Mammary epithelial cell (primary cell): ENCODE measurements at regions of chr15 and their contacts with region 1.

Region 1: GRCh38 chr15:48975472-48976419 is 12.0 kb upstream of the SHC4 start:
- DNase-seq: peak; percentile 72
- H3K4me3 ChIP-seq: peak overlapping the region; percentile 50 to 63 (median 59)
- H3K27ac ChIP-seq: no peak overlapping the region
- H3K4me1 ChIP-seq: peaks cover 5% of the 10 kb centered on the region
- H3K27me3 ChIP-seq: no peaks in the 10 kb centered on the region
- CTCF ChIP-seq: peak; percentile 68 to 75

Region 2: GRCh38 chr15:48868536-48868935 is 107.2 kb before region 1 on chr15:
- CTCF ChIA-PET with region 1: no interaction called
- dilution Hi-C with region 1: loop called (anchors 5 kb)
- in situ Hi-C with region 1: no loop called
- intact Hi-C with region 1: no loop called
- DNase-seq: peak; percentile 86
- H3K4me3 ChIP-seq: peak overlapping the region in 1 of 3 experiments; percentile 11
- H3K27ac ChIP-seq: peak overlapping the region; percentile 75
- H3K4me1 ChIP-seq: peaks cover 25% of the 10 kb centered on the region
- H3K27me3 ChIP-seq: no peaks in the 10 kb centered on the region
- CTCF ChIP-seq: no peak

Region 3: GRCh38 chr15:48888191-48888590 is 87.6 kb before region 1 on chr15:
- CTCF ChIA-PET with region 1: no interaction called
- dilution Hi-C with region 1: no loop called
- in situ Hi-C with region 1: no loop called
- intact Hi-C with region 1: no loop called
- DNase-seq: no peak
- H3K4me3 ChIP-seq: no peak overlapping the region
- H3K27ac ChIP-seq: no peak overlapping the region
- H3K4me1 ChIP-seq: peaks cover 10% of the 10 kb centered on the region
- H3K27me3 ChIP-seq: no peaks in the 10 kb centered on the region
- CTCF ChIP-seq: no peak

Region 4: GRCh38 chr15:49023354-49023753 is 47.6 kb after region 1 on chr15:
- CTCF ChIA-PET with region 1: no interaction called
- dilution Hi-C with region 1: no loop called
- in situ Hi-C with region 1: no loop called
- intact Hi-C with region 1: no loop called
- DNase-seq: no peak
- H3K4me3 ChIP-seq: no peak overlapping the region
- H3K27ac ChIP-seq: no peak overlapping the region
- H3K4me1 ChIP-seq: no peaks in the 10 kb centered on the region
- H3K27me3 ChIP-seq: no peaks in the 10 kb centered on the region
- CTCF ChIP-seq: no peak

Region 5: GRCh38 chr15:49145651-49146609 is 170.2 kb after region 1 on chr15:
- CTCF ChIA-PET with region 1: interaction called, 12 read pairs
- dilution Hi-C with region 1: no loop called
- in situ Hi-C with region 1: no loop called
- intact Hi-C with region 1: no loop called
- DNase-seq: peak; percentile 52
- H3K4me3 ChIP-seq: peak overlapping the region in 1 of 3 experiments; percentile 17
- H3K27ac ChIP-seq: peak overlapping the region; percentile 15
- H3K4me1 ChIP-seq: no peaks in the 10 kb centered on the region
- H3K27me3 ChIP-seq: no peaks in the 10 kb centered on the region
- CTCF ChIP-seq: peak; percentile 69 to 79

Region 6: GRCh38 chr15:49492824-49493223 is 517.1 kb after region 1 on chr15:
- CTCF ChIA-PET with region 1: no interaction called
- dilution Hi-C with region 1: no loop called
- in situ Hi-C with region 1: no loop called
- intact Hi-C with region 1: no loop called
- DNase-seq: peak; percentile 90
- H3K4me3 ChIP-seq: no peak overlapping the region
- H3K27ac ChIP-seq: no peak overlapping the region
- H3K4me1 ChIP-seq: no peaks in the 10 kb centered on the region
- H3K27me3 ChIP-seq: no peaks in the 10 kb centered on the region
- CTCF ChIP-seq: no peak